GM12878 (cell line): ENCODE measurements at regions of chr14 and their contacts with region 1.

Region 1: GRCh38 chr14:106872611-106873446 is 1346.4 kb downstream of the TMEM121 start:
- DNase-seq: no peak
- ATAC-seq: peak; percentile 86
- H3K4me3 ChIP-seq: peak overlapping the region; percentile 50; the same call in 1 of the 2 replicates
- H3K27ac ChIP-seq: no peak overlapping the region
- H3K4me1 ChIP-seq: peaks cover 25% of the 10 kb centered on the region
- H3K27me3 ChIP-seq: peaks cover 0 to 2% of the 10 kb centered on the region in 2 experiments; a peak in 2 of 4 replicates
- CTCF ChIP-seq: peak; percentile 62 to 93 (median 75)
- EP300 ChIP-seq: no peak
- POLR2A ChIP-seq: no peak
- RAD21 ChIP-seq: peak; percentile 73

Region 2: DNA sequence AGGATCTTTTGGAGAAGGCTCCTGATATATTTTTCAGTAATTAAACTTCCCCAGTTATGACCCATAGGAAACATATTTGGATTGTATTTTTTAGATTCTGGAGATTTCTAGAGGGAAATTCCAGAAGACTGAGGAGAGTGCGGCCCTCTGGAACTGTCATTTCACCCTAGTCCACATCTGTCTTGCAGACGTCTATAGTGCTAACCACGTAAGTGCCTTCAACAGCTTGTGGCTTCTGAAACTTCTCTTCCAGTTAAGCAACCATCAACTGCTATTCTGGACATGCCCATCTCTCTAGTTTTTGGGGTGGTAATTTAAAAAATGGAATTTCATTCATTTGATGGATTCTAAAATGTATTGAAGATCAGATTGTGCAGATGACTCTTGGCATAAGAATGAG is 247.6 kb before region 1 on chr14:
- CTCF ChIA-PET with region 1: no interaction called
- POLR2A ChIA-PET with region 1: no interaction called
- RAD21 ChIA-PET with region 1: no interaction called
- SMC1A ChIA-PET with region 1: no interaction called
- in situ Hi-C with region 1: no loop called
- intact Hi-C with region 1: no loop called
- DNase-seq: no peak
- ATAC-seq: peak; percentile 50; the same call in 2 of the 3 replicates
- H3K4me3 ChIP-seq: no peak overlapping the region
- H3K27ac ChIP-seq: no peak overlapping the region
- H3K4me1 ChIP-seq: no peaks in the 10 kb centered on the region
- H3K27me3 ChIP-seq: peaks cover 3 to 6% of the 10 kb centered on the region in 2 experiments
- CTCF ChIP-seq: no peak
- EP300 ChIP-seq: no peak
- POLR2A ChIP-seq: no peak
- RAD21 ChIP-seq: no peak

Region 3: GRCh38 chr14:106691601-106692291 is 181.1 kb before region 1 on chr14:
- CTCF ChIA-PET with region 1: interaction called, 10 read pairs
- POLR2A ChIA-PET with region 1: no interaction called
- RAD21 ChIA-PET with region 1: interaction called, 5 read pairs
- SMC1A ChIA-PET with region 1: no interaction called
- in situ Hi-C with region 1: no loop called
- intact Hi-C with region 1: no loop called
- DNase-seq: peak; percentile 79
- ATAC-seq: peak; percentile 88
- H3K4me3 ChIP-seq: no peak overlapping the region
- H3K27ac ChIP-seq: no peak overlapping the region
- H3K4me1 ChIP-seq: peaks cover 6% of the 10 kb centered on the region
- H3K27me3 ChIP-seq: peaks cover 0 to 4% of the 10 kb centered on the region in 2 experiments; a peak in 1 of 4 replicates
- CTCF ChIP-seq: peak; percentile 91 to 100 (median 100)
- EP300 ChIP-seq: no peak
- POLR2A ChIP-seq: no peak
- RAD21 ChIP-seq: peak; percentile 55; the same call in 1 of the 2 replicates

Region 4: DNA sequence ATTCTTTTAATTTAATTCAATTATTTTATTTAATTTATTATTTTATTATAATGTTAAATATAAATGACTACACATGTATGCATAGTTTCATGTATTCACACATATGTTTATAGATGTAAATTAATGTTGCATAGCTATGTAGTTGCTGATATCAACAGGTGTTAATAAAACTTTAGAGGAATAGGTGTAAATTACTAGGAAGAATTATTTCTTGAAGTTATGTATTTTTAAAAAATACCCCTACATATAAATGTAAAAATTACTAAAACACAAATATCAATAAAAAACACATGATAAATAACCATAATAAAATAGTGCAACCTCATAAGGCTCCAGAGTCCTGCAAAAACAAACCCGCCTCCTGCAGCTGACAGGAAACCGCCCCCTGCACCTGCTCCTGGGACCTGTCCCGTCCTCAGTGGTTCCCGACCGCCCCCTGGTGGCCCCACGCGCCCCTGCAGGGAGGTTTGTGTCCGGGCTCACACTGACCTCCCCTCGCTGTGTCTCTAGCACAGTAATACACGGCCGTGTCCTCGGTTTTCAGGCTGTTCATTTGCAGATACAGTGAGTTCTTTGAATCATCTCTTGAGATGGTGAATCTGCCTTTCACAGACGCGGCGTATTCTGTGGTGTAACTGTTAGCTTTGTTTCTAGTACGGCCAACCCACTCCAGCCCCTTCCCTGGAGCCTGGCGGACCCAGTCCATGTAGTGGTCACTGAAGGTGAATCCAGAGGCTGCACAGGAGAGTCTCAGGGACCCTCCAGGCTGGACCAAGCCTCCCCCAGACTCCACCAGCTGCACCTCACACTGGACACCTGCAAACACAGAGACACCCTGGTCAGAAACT is 82.4 kb before region 1 on chr14:
- CTCF ChIA-PET with region 1: interaction called, 40 read pairs
- POLR2A ChIA-PET with region 1: no interaction called
- RAD21 ChIA-PET with region 1: interaction called, 11 read pairs
- SMC1A ChIA-PET with region 1: interaction called, 7 read pairs
- in situ Hi-C with region 1: no loop called
- intact Hi-C with region 1: no loop called
- DNase-seq: no peak
- ATAC-seq: peak; percentile 92
- H3K4me3 ChIP-seq: no peak overlapping the region
- H3K27ac ChIP-seq: no peak overlapping the region
- H3K4me1 ChIP-seq: no peaks in the 10 kb centered on the region
- H3K27me3 ChIP-seq: no peaks in the 10 kb centered on the region
- CTCF ChIP-seq: peak; percentile 72 to 95 (median 93)
- EP300 ChIP-seq: no peak
- POLR2A ChIP-seq: no peak
- RAD21 ChIP-seq: peak; percentile 82

Region 5: GRCh38 chr14:106837870-106838269 is 35.0 kb before region 1 on chr14:
- CTCF ChIA-PET with region 1: interaction called, 605 read pairs
- POLR2A ChIA-PET with region 1: interaction called, 3 read pairs
- RAD21 ChIA-PET with region 1: interaction called, 119 read pairs
- SMC1A ChIA-PET with region 1: interaction called, 244 read pairs
- in situ Hi-C with region 1: no loop called
- intact Hi-C with region 1: no loop called
- DNase-seq: no peak
- ATAC-seq: no peak
- H3K4me3 ChIP-seq: no peak overlapping the region
- H3K27ac ChIP-seq: no peak overlapping the region
- H3K4me1 ChIP-seq: no peaks in the 10 kb centered on the region
- H3K27me3 ChIP-seq: no peaks in the 10 kb centered on the region
- CTCF ChIP-seq: no peak
- EP300 ChIP-seq: no peak
- POLR2A ChIP-seq: no peak
- RAD21 ChIP-seq: no peak

Region 6: GRCh38 chr14:106850913-106851825 is 21.7 kb before region 1 on chr14:
- CTCF ChIA-PET with region 1: interaction called, 605 read pairs
- POLR2A ChIA-PET with region 1: interaction called, 6 read pairs
- RAD21 ChIA-PET with region 1: interaction called, 119 read pairs
- SMC1A ChIA-PET with region 1: interaction called, 244 read pairs
- in situ Hi-C with region 1: no loop called
- intact Hi-C with region 1: loop called (anchors 1 kb)
- DNase-seq: no peak
- ATAC-seq: peak; percentile 75
- H3K4me3 ChIP-seq: peak overlapping the region; percentile 71
- H3K27ac ChIP-seq: peak overlapping the region; percentile 7
- H3K4me1 ChIP-seq: peaks cover 29% of the 10 kb centered on the region
- H3K27me3 ChIP-seq: no peaks in the 10 kb centered on the region
- CTCF ChIP-seq: no peak
- EP300 ChIP-seq: no peak; a peak in 1 of 4 replicates
- POLR2A ChIP-seq: peak; percentile 65
- RAD21 ChIP-seq: no peak